ENCODE measurements at regions of chr6 and their contacts with region 1.

Region 1: DNA sequence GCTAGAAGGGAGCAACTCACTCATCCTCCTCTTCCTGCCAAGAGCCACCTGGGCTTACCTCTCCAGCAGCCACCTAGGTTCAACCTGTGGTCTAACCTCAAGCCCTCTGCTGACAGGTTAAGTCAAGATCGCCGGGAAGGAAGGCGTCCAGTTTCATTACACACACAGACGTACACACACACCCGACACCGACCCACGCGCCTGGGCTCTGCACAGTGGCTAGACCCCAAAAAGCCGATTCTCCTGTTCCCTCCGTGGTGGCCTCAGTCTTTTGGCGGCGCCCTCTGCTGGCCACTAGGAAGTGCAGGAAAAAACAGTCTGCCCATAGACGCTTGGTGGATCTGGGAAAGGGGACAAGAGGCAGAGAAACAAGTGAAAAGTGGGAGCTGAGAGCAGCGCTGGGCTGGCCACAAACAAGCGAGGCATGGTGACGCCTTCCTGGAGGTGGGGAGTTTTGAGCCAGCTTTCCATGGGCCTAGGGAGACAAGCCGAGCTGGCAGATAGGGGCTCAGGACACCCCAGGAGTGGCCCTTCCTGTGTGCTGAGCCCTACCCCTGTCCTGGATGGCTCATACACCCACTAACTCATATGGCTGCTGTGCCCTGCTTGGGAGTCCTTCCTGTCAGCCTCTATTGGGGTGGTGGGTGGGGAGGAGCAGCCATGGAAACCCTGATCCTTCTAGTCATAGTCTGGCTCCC is 52.7 kb downstream of the MRPL14 start:
- DNase-seq: peak; percentile 85
- ATAC-seq: peak; percentile 75

Region 2: DNA sequence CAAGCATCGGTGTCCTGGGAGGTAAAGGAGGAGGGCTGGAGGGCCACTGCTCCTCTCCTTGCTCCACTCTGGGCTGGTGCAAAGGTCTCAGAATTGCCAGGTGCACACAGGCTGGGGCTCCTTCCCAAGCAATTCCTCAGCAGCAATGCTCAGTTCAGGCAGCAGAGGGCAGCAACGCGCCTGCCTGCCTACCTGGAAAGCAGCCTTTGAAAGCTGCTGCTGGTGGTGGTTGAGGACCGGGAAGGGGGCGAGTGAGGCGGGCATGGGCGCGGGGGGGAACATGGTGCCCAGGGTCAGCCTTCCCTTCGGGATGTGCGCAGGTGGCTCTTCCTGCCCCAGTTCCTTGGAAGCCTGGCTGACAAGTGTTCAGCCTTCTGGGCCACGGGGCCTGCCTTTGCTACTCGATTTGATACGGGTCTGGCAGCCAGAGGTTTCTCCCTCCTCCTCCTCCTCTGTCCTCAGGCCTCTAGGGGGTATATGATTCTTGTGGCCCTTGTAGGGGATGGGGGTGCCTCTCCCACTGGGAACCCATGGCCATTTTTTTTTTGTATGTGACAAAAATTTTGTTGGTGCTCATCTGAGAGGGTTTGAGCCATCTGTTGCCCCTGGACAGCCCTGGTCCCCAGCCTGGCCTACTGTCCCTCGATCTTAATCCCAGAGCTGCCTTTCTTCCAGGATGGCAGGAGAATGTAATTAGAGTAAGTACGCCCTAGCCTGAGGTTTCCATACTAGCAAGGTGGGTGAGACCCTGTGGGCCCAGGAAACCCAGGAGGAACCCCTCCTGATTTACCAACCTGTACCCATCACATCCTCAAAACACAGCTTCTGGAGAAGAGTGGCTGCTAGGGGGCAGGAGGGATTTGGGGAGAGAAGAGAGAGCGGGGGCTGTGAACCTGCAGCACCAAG is 407.1 kb before region 1 on chr6:
- intact Hi-C with region 1: loop called (anchors 5 kb)
- DNase-seq: peak; percentile 91
- ATAC-seq: peak; percentile 59

Region 3: DNA sequence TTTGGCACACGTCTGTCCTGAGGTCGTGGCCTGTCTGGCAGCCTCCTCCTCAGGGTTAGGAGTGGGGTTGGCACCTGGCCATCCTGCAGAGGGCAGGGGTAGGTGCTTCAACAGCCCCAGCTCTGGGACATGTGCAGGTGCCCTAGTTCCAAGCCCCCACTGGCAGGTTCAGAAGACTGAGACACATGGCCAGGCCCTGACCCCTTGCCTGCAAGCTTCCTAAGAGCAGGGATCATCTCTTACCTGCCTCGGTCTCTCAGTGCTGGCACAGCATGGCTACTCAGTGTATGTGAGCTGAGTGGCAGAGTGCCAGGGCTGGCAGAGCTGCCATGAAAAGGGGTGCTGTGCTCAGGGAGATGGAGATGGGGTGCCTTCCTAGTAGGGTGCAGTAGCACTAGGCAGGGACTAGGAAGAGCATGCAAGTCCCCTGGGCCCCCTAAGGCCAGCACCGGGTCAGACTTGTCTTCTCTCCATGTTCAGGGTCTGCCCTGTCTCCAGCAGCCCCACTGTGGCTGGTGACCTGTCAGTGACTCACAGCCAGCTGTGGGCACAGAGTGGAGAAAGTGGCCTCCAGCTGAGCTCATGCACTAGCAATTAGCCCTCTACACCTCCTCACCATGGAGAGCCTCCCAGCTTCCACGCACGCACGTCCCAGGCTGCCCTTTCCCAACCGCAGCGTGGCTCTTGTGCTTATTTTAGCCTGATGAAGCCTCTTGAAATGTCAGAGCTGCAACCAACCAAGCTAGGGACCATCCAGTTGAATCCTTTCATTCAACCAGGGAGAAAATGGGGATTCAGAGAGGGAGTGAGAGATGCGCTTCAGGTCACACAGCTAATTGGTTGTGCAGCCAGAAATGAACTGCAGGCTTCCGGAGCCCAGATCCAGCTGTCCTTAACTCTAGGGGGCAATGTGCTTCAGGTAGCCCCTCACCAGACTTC is 63.9 kb before region 1 on chr6:
- intact Hi-C with region 1: no loop called
- DNase-seq: peak; percentile 57
- ATAC-seq: peak; percentile 29

Measured in sciatic nerve (tissue), 2 donors.